ENCODE measurements at regions of chr11 and their contacts with region 1.

Region 1: DNA sequence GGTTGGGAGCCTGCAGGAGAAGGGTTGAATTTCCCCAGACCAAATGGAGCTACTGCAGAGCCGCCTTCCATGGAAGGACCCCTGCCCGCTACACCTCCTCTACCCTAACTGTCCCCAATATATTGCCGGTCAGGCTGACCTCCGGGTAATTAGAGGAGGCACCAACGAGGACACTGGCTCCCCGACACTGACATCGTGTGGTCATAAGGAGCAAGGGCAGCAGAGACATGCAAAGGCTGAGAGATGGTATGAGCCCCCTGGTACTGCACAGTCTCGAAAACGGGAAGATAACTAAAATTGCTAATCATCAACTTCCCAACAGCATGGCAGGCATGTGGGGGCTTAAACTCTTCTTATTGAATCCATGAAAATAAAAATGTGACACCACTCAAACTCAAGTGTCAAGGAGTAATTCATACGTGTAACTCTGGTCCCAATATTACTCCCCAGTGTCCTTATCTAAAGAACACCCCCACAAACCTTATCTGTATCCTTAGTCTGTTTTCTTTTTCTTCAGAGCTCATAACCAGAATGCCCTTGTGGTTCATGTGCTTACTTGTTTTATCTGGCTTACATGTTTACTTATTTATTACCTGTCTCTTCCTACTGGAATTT is 4.4 kb downstream of the CAVIN3 start:
- DNase-seq: peak; percentile 59
- ATAC-seq: peak; percentile 33
- H3K4me3 Mint-ChIP-seq: no peak overlapping the region
- H3K27ac Mint-ChIP-seq: no peak overlapping the region
- H3K4me1 Mint-ChIP-seq: peaks cover 12% of the 10 kb centered on the region
- H3K27me3 Mint-ChIP-seq: peaks cover 42% of the 10 kb centered on the region

Region 2: GRCh38 chr11:6022956-6023355 is 293.0 kb before region 1 on chr11:
- CTCF ChIA-PET with region 1: interaction called, 3 read pairs
- POLR2A ChIA-PET with region 1: no interaction called
- intact Hi-C with region 1: loop called in 1 of 2 experiments (anchors 1 kb)
- DNase-seq: no peak
- ATAC-seq: peak; percentile 55
- H3K4me3 Mint-ChIP-seq: no peak overlapping the region
- H3K27ac Mint-ChIP-seq: no peak overlapping the region
- H3K4me1 Mint-ChIP-seq: no peaks in the 10 kb centered on the region
- H3K27me3 Mint-ChIP-seq: peaks cover 21% of the 10 kb centered on the region

Region 3: GRCh38 chr11:6156628-6157359 is 159.1 kb before region 1 on chr11:
- CTCF ChIA-PET with region 1: no interaction called
- POLR2A ChIA-PET with region 1: no interaction called
- intact Hi-C with region 1: no loop called
- DNase-seq: no peak
- ATAC-seq: no peak
- H3K4me3 Mint-ChIP-seq: no peak overlapping the region
- H3K27ac Mint-ChIP-seq: no peak overlapping the region
- H3K4me1 Mint-ChIP-seq: no peaks in the 10 kb centered on the region
- H3K27me3 Mint-ChIP-seq: peaks cover 8% of the 10 kb centered on the region

Region 4: DNA sequence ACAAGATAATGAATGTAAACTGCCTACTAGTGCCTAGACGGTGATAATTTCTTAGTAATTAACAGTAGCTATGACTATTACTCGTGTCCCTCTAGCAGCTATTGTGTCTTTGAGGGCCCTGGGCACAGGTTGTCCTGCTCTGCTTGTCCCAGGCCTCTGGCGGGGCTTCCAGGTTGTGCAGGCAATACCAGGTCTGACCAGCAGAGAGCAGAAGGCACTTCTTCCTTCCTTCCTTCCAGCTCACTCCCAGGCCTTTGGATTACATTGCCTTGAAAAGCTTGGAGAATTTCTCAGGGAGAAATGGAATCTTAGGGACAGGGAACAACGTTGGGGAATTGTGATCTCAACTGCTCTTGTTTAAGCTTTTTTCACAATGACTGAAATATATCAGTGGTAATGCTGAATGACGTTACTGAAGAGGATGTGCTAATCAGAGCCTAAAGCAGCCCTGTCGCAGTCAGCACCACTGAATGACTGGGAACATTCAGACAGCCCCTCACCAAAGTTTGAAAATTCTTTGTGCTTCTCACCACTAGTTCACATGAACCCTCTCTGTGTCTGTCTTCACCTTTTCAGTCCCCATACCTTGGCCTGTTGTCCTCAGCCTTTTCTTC is 64.7 kb before region 1 on chr11:
- CTCF ChIA-PET with region 1: interaction called, 20 read pairs
- POLR2A ChIA-PET with region 1: no interaction called
- intact Hi-C with region 1: loop called in 1 of 2 experiments (anchors 1 kb)
- DNase-seq: peak; percentile 77
- ATAC-seq: peak; percentile 86
- H3K4me3 Mint-ChIP-seq: no peak overlapping the region
- H3K27ac Mint-ChIP-seq: no peak overlapping the region
- H3K4me1 Mint-ChIP-seq: no peaks in the 10 kb centered on the region
- H3K27me3 Mint-ChIP-seq: no peaks in the 10 kb centered on the region

Region 5: DNA sequence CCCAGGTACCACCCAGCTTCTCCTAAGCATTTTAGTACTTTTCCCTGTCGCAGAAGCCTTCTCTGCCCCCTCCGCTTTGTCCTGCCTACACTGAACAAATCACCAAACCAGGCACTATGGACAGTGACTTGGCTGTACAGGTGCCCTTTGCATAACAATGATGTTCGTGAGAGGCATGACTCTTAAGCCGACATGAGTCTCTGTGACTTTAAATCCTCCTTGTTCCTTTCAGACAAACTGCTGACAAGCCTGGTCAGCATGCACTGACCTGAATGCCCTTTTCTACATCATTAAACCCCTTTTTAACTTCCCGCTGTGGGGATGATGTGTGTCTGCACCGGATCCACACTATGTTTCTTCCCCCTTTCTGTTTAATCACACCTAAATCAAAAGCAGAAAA is 12.3 kb before region 1 on chr11:
- CTCF ChIA-PET with region 1: interaction called, 20 read pairs
- POLR2A ChIA-PET with region 1: no interaction called
- intact Hi-C with region 1: no loop called
- DNase-seq: no peak
- ATAC-seq: no peak
- H3K4me3 Mint-ChIP-seq: no peak overlapping the region
- H3K27ac Mint-ChIP-seq: no peak overlapping the region
- H3K4me1 Mint-ChIP-seq: no peaks in the 10 kb centered on the region
- H3K27me3 Mint-ChIP-seq: peaks cover 37% of the 10 kb centered on the region

Region 6: DNA sequence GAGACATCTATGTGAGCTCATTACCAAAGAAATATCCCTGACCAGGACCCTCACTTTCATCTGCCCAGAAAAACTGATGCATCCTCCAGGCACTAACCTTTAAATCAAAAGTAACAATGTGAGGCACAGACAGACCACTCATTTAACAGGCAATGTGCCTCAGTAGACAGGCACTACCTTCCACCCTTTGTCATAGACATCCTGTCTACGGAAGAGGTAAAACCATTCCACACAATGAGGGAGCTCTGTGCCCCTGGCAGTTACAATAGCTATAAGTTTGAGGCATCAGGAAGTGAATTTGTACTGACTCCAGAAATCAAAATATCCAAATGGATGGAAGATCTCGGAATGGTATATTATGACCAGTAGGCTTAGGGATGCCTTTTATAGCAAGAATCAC is 11.1 kb after region 1 on chr11:
- CTCF ChIA-PET with region 1: interaction called, 11 read pairs
- POLR2A ChIA-PET with region 1: no interaction called
- intact Hi-C with region 1: no loop called
- DNase-seq: no peak
- ATAC-seq: no peak
- H3K4me3 Mint-ChIP-seq: no peak overlapping the region
- H3K27ac Mint-ChIP-seq: no peak overlapping the region
- H3K4me1 Mint-ChIP-seq: peaks cover 7% of the 10 kb centered on the region
- H3K27me3 Mint-ChIP-seq: peaks cover 26% of the 10 kb centered on the region

Region 7: DNA sequence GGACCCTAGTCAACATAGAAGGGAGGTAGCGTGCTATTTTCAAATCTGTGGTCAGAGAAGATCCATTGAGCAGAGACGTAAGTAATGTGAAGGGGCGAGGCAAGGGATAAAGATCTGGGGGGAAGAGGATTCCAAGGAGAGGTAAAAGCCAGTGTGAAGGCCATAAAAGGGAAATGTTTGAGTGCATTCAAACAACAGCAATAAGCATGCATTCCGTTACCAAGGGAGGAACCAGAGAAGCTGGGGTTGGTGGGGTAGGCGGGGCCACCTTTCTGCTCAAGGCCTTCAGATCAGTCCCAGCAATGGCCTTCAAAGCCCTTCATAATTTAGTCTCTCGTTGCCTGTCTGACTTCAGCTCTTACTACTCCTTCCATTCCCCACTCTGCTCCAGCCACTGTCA is 55.9 kb after region 1 on chr11:
- CTCF ChIA-PET with region 1: no interaction called
- POLR2A ChIA-PET with region 1: no interaction called
- intact Hi-C with region 1: no loop called
- DNase-seq: no peak
- ATAC-seq: no peak
- H3K4me3 Mint-ChIP-seq: no peak overlapping the region
- H3K27ac Mint-ChIP-seq: no peak overlapping the region
- H3K4me1 Mint-ChIP-seq: peaks cover 4% of the 10 kb centered on the region
- H3K27me3 Mint-ChIP-seq: no peaks in the 10 kb centered on the region

Region 8: DNA sequence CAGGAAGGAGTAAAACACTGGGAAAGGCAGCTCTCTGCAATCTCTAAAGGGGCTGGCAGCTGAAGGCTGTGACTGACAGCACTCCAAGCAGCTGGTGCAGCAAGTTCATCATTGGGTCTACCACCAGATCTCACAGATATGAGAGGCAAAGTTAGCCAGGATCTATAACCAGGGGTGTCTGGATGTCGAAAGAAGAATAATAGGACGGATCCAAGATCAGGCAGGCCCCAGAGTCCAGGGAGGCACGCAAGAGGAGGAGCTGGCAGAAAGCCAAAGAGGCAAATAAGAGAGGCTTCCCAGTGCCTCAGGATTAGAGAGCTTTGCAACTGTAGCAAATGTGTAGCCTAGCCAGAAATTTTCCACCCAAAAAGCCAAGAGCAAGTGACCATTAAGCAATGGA is 850.0 kb after region 1 on chr11:
- CTCF ChIA-PET with region 1: no interaction called
- POLR2A ChIA-PET with region 1: no interaction called
- intact Hi-C with region 1: no loop called
- DNase-seq: no peak
- ATAC-seq: no peak
- H3K4me3 Mint-ChIP-seq: no peak overlapping the region
- H3K27ac Mint-ChIP-seq: no peak overlapping the region
- H3K4me1 Mint-ChIP-seq: peaks cover 3% of the 10 kb centered on the region
- H3K27me3 Mint-ChIP-seq: peaks cover 2% of the 10 kb centered on the region

Region 9: GRCh38 chr11:7353100-7353499 is 1037.2 kb after region 1 on chr11:
- CTCF ChIA-PET with region 1: no interaction called
- POLR2A ChIA-PET with region 1: no interaction called
- intact Hi-C with region 1: no loop called
- DNase-seq: peak; percentile 40
- ATAC-seq: peak; percentile 39
- H3K4me3 Mint-ChIP-seq: no peak overlapping the region
- H3K27ac Mint-ChIP-seq: no peak overlapping the region
- H3K4me1 Mint-ChIP-seq: no peaks in the 10 kb centered on the region
- H3K27me3 Mint-ChIP-seq: peaks cover 8% of the 10 kb centered on the region

Measured in activated CD4-positive, alpha-beta T cell treated with anti-CD3 and anti-CD28 coated beads for 36 hours (primary cell).